Naive thymus-derived CD4-positive, alpha-beta T cell (primary cell): ENCODE measurements at regions of chr2 and their contacts with region 1.

Region 1: DNA sequence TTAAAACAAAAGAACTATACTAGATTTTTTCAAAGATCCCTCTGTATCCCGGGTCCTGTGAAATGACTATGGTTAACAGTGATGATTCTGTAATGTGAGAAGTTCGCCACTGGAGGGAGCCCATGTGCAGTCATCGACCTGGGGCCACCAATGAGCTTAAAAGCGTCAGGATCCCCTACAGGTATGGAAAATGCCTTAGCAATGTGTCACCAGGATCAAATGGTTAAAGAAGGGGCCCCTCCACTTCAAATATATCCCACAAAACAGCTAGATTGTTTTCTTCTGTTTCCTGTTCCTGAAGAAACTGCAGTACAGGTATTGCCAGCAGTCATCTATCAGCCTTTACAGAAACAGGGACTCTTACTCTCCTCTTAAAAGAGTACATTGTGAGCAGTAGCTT is 15.3 kb downstream of the CHRNA1 start:
- DNase-seq: peak; percentile 42 to 80 (median 67)
- ATAC-seq: peak; percentile 83
- H3K4me3 ChIP-seq: no peak overlapping the region
- H3K4me3 Mint-ChIP-seq: no peak overlapping the region
- H3K27ac ChIP-seq: no peak overlapping the region
- H3K27ac Mint-ChIP-seq: peak overlapping the region in 4 of 9 donors; percentile 25 to 64 (median 44)
- H3K4me1 ChIP-seq: peaks cover 8 to 47% of the 10 kb centered on the region in 2 donors
- H3K4me1 Mint-ChIP-seq: peaks cover 7 to 31% (median 16%) of the 10 kb centered on the region in 7 donors
- H3K27me3 ChIP-seq: no peaks in the 10 kb centered on the region
- H3K27me3 Mint-ChIP-seq: peaks cover 0 to 28% (median 0%) of the 10 kb centered on the region in 5 donors

Region 2: DNA sequence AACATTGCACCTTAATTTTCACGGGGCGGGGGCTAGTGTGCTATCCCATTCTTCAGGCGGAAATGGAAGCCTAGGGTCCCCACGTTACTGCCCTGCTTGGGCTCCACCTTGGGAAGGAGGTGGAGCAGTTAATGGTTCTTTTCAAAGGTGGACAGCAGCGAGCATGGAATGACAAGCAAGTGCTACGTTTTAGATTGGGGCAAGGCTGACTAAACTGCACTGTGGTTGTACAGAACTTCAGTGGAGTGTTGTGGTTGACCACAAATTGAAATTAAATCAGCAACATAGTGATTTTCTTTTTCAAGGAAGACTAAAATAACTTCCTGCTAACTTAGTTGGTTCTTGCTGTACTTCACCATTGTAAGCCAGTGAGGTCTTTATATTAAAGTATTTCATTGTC is 31.7 kb before region 1 on chr2:
- CTCF ChIA-PET with region 1: interaction called, 5 read pairs
- POLR2A ChIA-PET with region 1: interaction called, 4 read pairs
- intact Hi-C with region 1: loop called (anchors 1 to 5 kb)
- DNase-seq: peak in 8 of 9 donors; percentile 34 to 76 (median 69)
- ATAC-seq: peak; percentile 75
- H3K4me3 ChIP-seq: peak overlapping the region; percentile 39
- H3K4me3 Mint-ChIP-seq: peak overlapping the region; percentile 63 to 88 (median 76)
- H3K27ac ChIP-seq: no peak overlapping the region
- H3K27ac Mint-ChIP-seq: peak overlapping the region; percentile 4 to 68 (median 25)
- H3K4me1 ChIP-seq: peaks cover 15 to 21% of the 10 kb centered on the region in 2 donors
- H3K4me1 Mint-ChIP-seq: peaks cover 21 to 41% (median 36%) of the 10 kb centered on the region in 7 donors
- H3K27me3 ChIP-seq: no peaks in the 10 kb centered on the region
- H3K27me3 Mint-ChIP-seq: peaks cover 0 to 10% (median 0%) of the 10 kb centered on the region in 5 donors

Region 3: GRCh38 chr2:174778085-174778981 is 29.4 kb after region 1 on chr2:
- CTCF ChIA-PET with region 1: interaction called, 12 read pairs
- POLR2A ChIA-PET with region 1: no interaction called
- intact Hi-C with region 1: loop called (anchors 1 kb)
- DNase-seq: peak; percentile 51 to 93 (median 91)
- ATAC-seq: peak; percentile 93
- H3K4me3 ChIP-seq: peak overlapping the region; percentile 3
- H3K4me3 Mint-ChIP-seq: peak overlapping the region; percentile 53 to 84 (median 72)
- H3K27ac ChIP-seq: peak overlapping the region; percentile 61
- H3K27ac Mint-ChIP-seq: peak overlapping the region; percentile 55 to 97 (median 95)
- H3K4me1 ChIP-seq: peaks cover 28 to 39% of the 10 kb centered on the region in 2 donors
- H3K4me1 Mint-ChIP-seq: peaks cover 34 to 60% (median 46%) of the 10 kb centered on the region in 7 donors
- H3K27me3 ChIP-seq: no peaks in the 10 kb centered on the region
- H3K27me3 Mint-ChIP-seq: no peaks in the 10 kb centered on the region

Region 4: GRCh38 chr2:174901075-174901474 is 152.1 kb after region 1 on chr2:
- CTCF ChIA-PET with region 1: no interaction called
- POLR2A ChIA-PET with region 1: no interaction called
- intact Hi-C with region 1: loop called in 1 of 2 experiments (anchors 2 kb)
- DNase-seq: peak in 8 of 9 donors; percentile 8 to 42 (median 26)
- ATAC-seq: peak; percentile 33
- H3K4me3 ChIP-seq: no peak overlapping the region
- H3K4me3 Mint-ChIP-seq: peak overlapping the region; percentile 1 to 95 (median 78)
- H3K27ac ChIP-seq: peak overlapping the region; percentile 76
- H3K27ac Mint-ChIP-seq: peak overlapping the region; percentile 76 to 97 (median 93)
- H3K4me1 ChIP-seq: peaks cover 0 to 17% of the 10 kb centered on the region in 2 donors
- H3K4me1 Mint-ChIP-seq: peaks cover 6 to 45% (median 29%) of the 10 kb centered on the region in 7 donors
- H3K27me3 ChIP-seq: no peaks in the 10 kb centered on the region
- H3K27me3 Mint-ChIP-seq: no peaks in the 10 kb centered on the region

Region 5: GRCh38 chr2:174985630-174986029 is 236.7 kb after region 1 on chr2:
- CTCF ChIA-PET with region 1: interaction called, 25 read pairs
- POLR2A ChIA-PET with region 1: no interaction called
- intact Hi-C with region 1: loop called (anchors 1 kb)
- DNase-seq: no peak
- ATAC-seq: no peak
- H3K4me3 ChIP-seq: no peak overlapping the region
- H3K4me3 Mint-ChIP-seq: no peak overlapping the region
- H3K27ac ChIP-seq: no peak overlapping the region
- H3K27ac Mint-ChIP-seq: no peak overlapping the region
- H3K4me1 ChIP-seq: no peaks in the 10 kb centered on the region
- H3K4me1 Mint-ChIP-seq: peaks cover 0 to 9% (median 7%) of the 10 kb centered on the region in 7 donors
- H3K27me3 ChIP-seq: no peaks in the 10 kb centered on the region
- H3K27me3 Mint-ChIP-seq: peaks cover 0 to 25% (median 5%) of the 10 kb centered on the region in 5 donors

Region 6: DNA sequence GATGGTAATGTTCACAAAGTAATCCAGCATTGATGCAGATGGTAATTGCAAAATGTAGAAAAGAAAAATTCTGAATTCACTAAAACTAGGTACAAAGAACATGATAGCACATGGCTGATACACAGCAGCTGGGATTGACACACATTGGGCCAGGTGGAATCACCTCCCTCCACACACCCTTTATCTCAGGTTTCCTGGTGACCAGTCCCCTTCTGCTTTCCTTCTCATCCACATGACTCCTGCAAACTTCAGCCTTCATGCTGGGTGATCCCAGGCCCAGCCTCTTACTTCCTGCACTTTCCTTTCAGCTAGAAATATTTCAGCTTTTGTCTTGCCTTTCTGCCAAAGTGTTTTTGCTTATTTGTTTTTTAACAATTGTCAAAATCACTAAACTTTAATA is 1006.2 kb after region 1 on chr2:
- CTCF ChIA-PET with region 1: no interaction called
- POLR2A ChIA-PET with region 1: no interaction called
- intact Hi-C with region 1: no loop called
- DNase-seq: no peak
- ATAC-seq: no peak
- H3K4me3 ChIP-seq: no peak overlapping the region
- H3K4me3 Mint-ChIP-seq: no peak overlapping the region
- H3K27ac ChIP-seq: no peak overlapping the region
- H3K27ac Mint-ChIP-seq: no peak overlapping the region
- H3K4me1 ChIP-seq: no peaks in the 10 kb centered on the region
- H3K4me1 Mint-ChIP-seq: no peaks in the 10 kb centered on the region
- H3K27me3 ChIP-seq: no peaks in the 10 kb centered on the region
- H3K27me3 Mint-ChIP-seq: peaks cover 2 to 36% (median 19%) of the 10 kb centered on the region in 5 donors